Left ventricle myocardium inferior (tissue), 1 donor: ENCODE measurements at regions of chr1 and their contacts with region 1.

Region 1: DNA sequence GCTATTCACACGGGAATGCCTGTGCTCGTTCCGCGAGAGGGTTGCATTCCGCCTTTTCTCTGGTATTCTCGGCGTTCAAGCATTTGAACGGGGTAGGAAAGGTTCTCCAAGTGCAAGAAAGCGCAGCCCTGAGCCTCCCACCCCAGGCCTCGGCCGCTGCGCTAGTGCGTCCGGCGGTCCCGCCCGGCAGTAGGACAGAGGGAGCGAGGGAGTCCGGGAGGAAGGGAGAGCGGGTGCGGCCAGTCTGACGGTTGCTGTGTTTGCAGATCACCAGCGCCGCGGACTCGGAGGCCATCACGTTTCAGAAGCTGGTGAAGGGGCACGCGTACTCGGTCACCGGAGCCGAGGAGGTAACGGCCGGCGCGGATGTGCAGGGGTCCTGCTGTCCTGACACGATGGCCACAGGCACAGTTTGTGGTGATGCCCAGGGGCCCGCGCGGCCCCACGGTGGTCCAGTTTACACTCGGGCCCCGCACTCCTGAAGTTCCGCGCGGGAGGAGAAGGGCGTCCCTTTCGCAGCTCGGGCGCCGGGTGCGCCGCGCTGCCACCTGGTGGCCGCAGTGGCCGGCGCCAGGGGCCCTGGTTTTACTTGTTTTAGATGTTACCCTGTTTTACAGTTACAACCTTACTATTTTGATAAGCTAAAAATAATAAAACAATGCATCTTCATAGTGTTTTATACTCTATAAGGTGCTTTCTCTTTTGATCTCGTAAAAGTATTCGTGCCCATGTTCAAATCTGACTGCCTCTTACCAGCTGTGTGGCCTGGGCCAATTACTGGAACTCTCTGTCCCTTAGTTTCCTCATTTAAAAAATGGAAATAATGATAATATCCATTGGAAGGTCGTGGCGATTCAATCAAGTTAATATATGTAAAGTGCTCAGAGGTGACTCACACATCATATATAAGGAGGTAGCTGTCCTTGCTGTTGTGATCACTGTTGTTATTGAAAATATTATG is 36.7 kb downstream of the CAPN2 start:
- DNase-seq: peak; percentile 63
- H3K4me3 ChIP-seq: peak overlapping the region; percentile 62
- H3K27ac ChIP-seq: peak overlapping the region; percentile 77
- H3K4me1 ChIP-seq: peaks cover 33% of the 10 kb centered on the region
- H3K27me3 ChIP-seq: no peaks in the 10 kb centered on the region
- CTCF ChIP-seq: peak; percentile 98

Region 2: GRCh38 chr1:223712194-223712849 is 36.7 kb before region 1 on chr1 and contains the start of gene CAPN2:
- intact Hi-C with region 1: loop called (anchors 5 kb)
- DNase-seq: peak; percentile 85
- H3K4me3 ChIP-seq: peak within 1 kb of the TSS; percentile 90
- H3K27ac ChIP-seq: peak within 1 kb of the TSS; percentile 98
- H3K4me1 ChIP-seq: peaks cover 87% of the 10 kb centered on the region
- H3K27me3 ChIP-seq: no peaks in the 10 kb centered on the region
- CTCF ChIP-seq: peak; percentile 87
- total RNA-seq, gene CAPN2: 65.3 TPM

Region 3: GRCh38 chr1:223827193-223827663 is 78.2 kb after region 1 on chr1:
- intact Hi-C with region 1: no loop called
- DNase-seq: no peak
- H3K4me3 ChIP-seq: no peak overlapping the region
- H3K27ac ChIP-seq: no peak overlapping the region
- H3K4me1 ChIP-seq: peaks cover 64% of the 10 kb centered on the region
- H3K27me3 ChIP-seq: no peaks in the 10 kb centered on the region
- CTCF ChIP-seq: no peak